Prostate gland (tissue), 2 donors: ENCODE measurements at regions of chr10 and their contacts with region 1.

Region 1: GRCh38 chr10:132351611-132352010 is 19.6 kb downstream of the LRRC27 start:
- DNase-seq: no peak
- H3K4me3 ChIP-seq: no peak overlapping the region
- H3K27ac ChIP-seq: no peak overlapping the region
- H3K4me1 ChIP-seq: no peaks in the 10 kb centered on the region
- H3K27me3 ChIP-seq: no peaks in the 10 kb centered on the region
- CTCF ChIP-seq: no peak
- POLR2A ChIP-seq: no peak

Region 2: DNA sequence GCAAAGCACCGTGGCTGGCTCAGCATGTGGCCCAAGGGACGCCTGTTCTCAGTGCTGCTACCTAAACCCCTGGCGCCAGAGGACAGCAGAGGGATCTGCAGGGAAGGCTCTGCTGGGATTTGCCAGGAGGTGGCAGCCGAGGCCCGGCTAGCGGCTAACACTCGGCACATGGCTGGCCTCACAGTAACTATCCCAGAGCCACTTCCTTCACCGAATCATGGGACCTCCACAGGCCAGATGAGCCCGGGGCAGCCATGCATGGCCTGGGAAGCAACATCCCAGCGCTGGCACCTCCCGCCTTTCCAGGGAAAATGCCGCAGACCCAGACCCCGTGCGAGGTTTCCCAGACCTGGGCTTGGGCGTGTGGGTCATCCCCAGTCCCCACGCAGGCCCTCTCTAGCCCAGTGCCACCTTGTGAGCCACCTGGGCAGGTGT is 128.4 kb before region 1 on chr10:
- intact Hi-C with region 1: loop called (anchors 2 kb)
- DNase-seq: peak; percentile 64
- H3K4me3 ChIP-seq: no peak overlapping the region
- H3K27ac ChIP-seq: no peak overlapping the region
- H3K4me1 ChIP-seq: no peaks in the 10 kb centered on the region
- H3K27me3 ChIP-seq: no peaks in the 10 kb centered on the region
- CTCF ChIP-seq: peak; percentile 54 to 95 (median 83)
- POLR2A ChIP-seq: no peak

Region 3: GRCh38 chr10:132724446-132724845 is 372.8 kb after region 1 on chr10:
- intact Hi-C with region 1: no loop called
- DNase-seq: no peak
- H3K4me3 ChIP-seq: no peak overlapping the region
- H3K27ac ChIP-seq: no peak overlapping the region
- H3K4me1 ChIP-seq: no peaks in the 10 kb centered on the region
- H3K27me3 ChIP-seq: no peaks in the 10 kb centered on the region
- CTCF ChIP-seq: no peak
- POLR2A ChIP-seq: no peak